Activated CD4-positive, alpha-beta T cell treated with anti-CD3 and anti-CD28 coated beads for 36 hours (primary cell): ENCODE measurements at regions of chr2 and their contacts with region 1.

Region 1: DNA sequence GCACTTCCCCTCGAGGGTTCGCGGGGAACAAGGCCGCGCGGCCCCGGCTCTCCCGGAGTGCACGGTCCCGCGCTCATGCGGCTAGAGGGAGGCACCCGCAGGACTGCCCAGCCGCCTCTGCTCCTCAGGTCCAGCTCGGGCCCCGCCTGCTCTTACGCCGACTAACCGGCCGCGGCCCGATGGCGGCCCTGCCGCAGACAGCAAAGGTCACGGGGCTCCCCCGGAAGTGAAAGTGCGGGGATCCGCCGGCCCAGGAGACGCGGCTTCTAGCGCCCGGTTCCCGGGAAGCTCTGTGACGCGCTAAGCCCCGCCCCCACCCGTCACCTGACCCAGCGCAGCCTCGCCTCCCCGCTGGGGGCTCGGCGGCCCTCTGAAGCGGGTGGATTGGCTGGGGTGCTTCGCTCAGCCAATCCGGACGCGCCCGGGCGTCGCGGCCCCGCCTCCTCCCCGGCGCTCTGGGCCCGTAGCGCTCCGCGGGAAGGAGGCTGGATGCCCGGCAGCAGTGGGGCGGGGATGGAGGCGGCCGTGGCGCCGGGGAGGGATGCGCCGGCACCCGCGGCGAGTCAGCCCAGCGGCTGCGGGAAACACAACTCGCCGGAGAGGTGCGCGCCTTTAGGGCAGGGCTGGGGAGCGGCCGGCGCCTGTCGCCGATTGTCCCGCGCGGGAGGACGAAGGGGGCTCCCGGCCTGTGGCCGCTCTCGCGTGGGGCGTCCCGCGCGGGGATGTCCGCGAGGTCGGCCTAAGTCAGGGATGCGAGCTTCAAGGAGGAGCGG is at the start of gene SCLY:
- DNase-seq: peak; percentile 99
- ATAC-seq: peak; percentile 97
- H3K4me3 Mint-ChIP-seq: peak within 1 kb of the TSS; percentile 80
- H3K27ac Mint-ChIP-seq: peak within 1 kb of the TSS; percentile 96
- H3K4me1 Mint-ChIP-seq: peaks cover 49% of the 10 kb centered on the region
- H3K27me3 Mint-ChIP-seq: peaks cover 10% of the 10 kb centered on the region
- total RNA-seq, gene SCLY: 59.2 to 60.5 TPM

Region 2: GRCh38 chr2:237966565-237967462 is 93.9 kb before region 1 on chr2 and contains the start of gene UBE2F:
- CTCF ChIA-PET with region 1: interaction called, 3 read pairs
- POLR2A ChIA-PET with region 1: no interaction called
- intact Hi-C with region 1: loop called (anchors 1 kb)
- DNase-seq: peak; percentile 98
- ATAC-seq: peak; percentile 95
- H3K4me3 Mint-ChIP-seq: peak within 1 kb of the TSS; percentile 78
- H3K27ac Mint-ChIP-seq: peak within 1 kb of the TSS; percentile 88
- H3K4me1 Mint-ChIP-seq: peaks cover 38% of the 10 kb centered on the region
- H3K27me3 Mint-ChIP-seq: no peaks in the 10 kb centered on the region
- total RNA-seq, gene UBE2F: 59.2 to 75.5 TPM

Region 3: GRCh38 chr2:238231251-238231793 is 170.6 kb after region 1 on chr2:
- CTCF ChIA-PET with region 1: no interaction called
- POLR2A ChIA-PET with region 1: no interaction called
- intact Hi-C with region 1: loop called in 1 of 2 experiments (anchors 2 kb)
- DNase-seq: peak; percentile 89
- ATAC-seq: peak; percentile 90
- H3K4me3 Mint-ChIP-seq: peak overlapping the region; percentile 74
- H3K27ac Mint-ChIP-seq: peak overlapping the region; percentile 62
- H3K4me1 Mint-ChIP-seq: peaks cover 23% of the 10 kb centered on the region
- H3K27me3 Mint-ChIP-seq: peaks cover 14% of the 10 kb centered on the region

Region 4: DNA sequence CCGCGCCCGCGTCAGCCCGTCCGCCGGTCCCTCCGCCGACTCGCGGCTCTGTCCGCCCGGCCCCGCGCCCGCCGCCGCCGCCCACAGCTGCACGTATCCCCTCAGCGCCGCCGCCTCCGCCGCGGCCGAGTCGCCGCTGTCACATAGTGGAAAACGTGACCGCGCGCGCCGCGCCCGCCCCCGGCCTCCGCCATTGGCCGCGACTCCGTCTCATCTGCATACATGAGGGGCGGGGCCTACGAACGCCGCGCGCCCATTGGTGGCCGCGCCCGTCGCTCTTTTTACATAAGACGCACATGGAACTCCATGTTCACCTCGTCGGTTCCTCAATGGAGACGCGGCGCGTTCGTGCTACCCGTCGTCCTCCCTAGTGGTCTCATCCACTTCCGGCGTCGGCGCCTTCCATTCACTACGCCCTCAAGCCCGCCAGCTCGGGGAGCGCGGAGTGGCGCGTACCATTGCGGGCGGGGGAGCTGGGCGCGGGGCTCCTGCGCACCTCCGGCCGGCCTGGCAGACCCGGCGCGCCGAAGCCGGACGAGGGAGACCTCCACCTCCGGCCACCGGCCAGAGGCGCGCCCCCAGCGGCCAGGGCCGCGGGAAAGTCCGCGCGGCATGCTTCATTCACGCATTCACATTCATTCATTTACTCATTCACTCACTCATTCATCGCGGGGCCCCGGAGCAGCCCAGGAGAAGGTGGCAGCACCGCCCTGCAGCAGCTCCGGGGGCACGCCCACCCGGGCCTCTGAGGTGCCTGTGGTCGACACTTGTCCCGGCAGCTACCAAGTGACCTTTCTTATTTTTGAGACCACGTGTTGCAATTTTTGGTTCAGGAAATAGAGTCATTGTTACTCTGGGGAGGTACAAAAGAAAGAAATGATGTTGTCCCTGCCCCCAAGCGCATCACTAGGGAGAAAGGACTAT is 228.2 kb after region 1 on chr2:
- CTCF ChIA-PET with region 1: interaction called, 3 read pairs
- POLR2A ChIA-PET with region 1: interaction called, 3 read pairs
- intact Hi-C with region 1: loop called in 1 of 2 experiments (anchors 1 kb)
- DNase-seq: peak; percentile 98
- ATAC-seq: peak; percentile 86
- H3K4me3 Mint-ChIP-seq: peak overlapping the region; percentile 74
- H3K27ac Mint-ChIP-seq: peak overlapping the region; percentile 82
- H3K4me1 Mint-ChIP-seq: peaks cover 32% of the 10 kb centered on the region
- H3K27me3 Mint-ChIP-seq: no peaks in the 10 kb centered on the region